ENCODE measurements at regions of chr5 and their contacts with region 1.

Region 1: DNA sequence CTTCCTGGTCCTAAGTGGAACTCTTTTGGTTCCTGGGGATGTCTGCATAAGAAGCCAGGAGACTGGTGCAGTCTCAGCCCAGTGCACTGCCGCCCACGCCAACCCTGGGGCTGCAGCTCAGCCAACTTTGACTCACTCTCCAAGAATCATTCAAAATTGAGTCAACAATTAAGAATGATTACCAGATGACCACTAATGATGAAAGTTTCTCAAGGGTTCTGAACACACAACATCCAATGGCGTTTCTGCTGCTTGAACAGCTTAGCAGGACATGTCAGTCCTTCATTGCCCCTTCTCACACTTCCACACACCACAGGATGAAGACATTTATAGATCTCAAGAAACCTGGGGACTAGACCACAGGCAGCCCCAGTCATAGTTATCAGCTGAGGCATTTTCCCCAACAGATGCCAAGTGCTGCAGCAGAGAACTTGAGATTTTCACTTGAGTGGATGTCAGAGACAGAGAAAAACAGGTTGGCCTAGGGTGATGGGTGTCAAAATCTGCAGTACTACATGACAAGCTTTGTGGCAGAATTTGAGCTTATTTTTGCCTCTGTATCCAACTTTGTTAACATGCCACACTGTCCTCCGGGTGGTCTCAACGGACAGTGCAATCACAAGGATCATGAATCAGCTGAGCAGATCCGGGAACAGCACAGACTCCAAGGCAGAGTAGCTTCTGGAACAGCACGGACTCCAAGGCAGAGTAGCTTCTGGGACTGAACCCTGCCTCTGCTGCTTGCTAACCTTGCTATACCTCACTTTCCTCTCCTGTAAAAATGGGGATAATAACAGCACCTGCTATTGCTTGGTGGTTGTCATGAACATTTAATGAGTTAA is 356.1 kb downstream of the SPOCK1 start:
- DNase-seq: peak; percentile 94
- ATAC-seq: peak; percentile 83
- H3K4me3 ChIP-seq: no peak overlapping the region
- H3K27ac ChIP-seq: peak overlapping the region; percentile 41
- H3K4me1 ChIP-seq: peaks cover 24% of the 10 kb centered on the region
- H3K27me3 ChIP-seq: no peaks in the 10 kb centered on the region
- CTCF ChIP-seq: no peak
- POLR2A ChIP-seq: no peak
- RAD21 ChIP-seq: peak; percentile 23; the same call in 1 of the 2 replicates

Region 2: DNA sequence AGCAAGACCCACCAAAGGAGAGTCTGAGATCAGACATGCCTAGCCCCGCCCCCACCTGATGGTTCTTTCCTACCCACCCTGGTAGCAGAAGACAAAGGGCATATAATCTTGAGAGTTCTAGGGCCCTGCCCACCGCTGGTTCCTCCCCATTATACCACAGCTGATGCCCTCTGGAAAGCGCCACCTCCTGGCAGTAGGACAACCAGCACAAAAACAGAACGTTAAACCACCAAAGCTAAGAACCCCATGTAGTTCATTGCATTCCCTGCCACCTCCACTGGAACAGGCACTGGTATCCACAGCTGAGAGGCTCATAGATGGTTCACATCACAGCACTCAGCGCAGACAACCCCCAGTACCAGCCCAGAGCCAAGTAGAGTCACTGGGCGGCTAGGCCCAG is 696.4 kb before region 1 on chr5:
- CTCF ChIA-PET with region 1: no interaction called
- POLR2A ChIA-PET with region 1: no interaction called
- dilution Hi-C with region 1: no loop called
- in situ Hi-C with region 1: no loop called
- intact Hi-C with region 1: no loop called
- DNase-seq: no peak
- ATAC-seq: no peak
- H3K4me3 ChIP-seq: no peak overlapping the region
- H3K27ac ChIP-seq: no peak overlapping the region
- H3K4me1 ChIP-seq: no peaks in the 10 kb centered on the region
- H3K27me3 ChIP-seq: no peaks in the 10 kb centered on the region
- CTCF ChIP-seq: no peak
- POLR2A ChIP-seq: no peak
- RAD21 ChIP-seq: no peak

Region 3: GRCh38 chr5:136840601-136841000 is 302.4 kb before region 1 on chr5:
- CTCF ChIA-PET with region 1: no interaction called
- POLR2A ChIA-PET with region 1: interaction called, 15 read pairs
- dilution Hi-C with region 1: no loop called
- in situ Hi-C with region 1: no loop called
- intact Hi-C with region 1: no loop called
- DNase-seq: no peak
- ATAC-seq: no peak
- H3K4me3 ChIP-seq: no peak overlapping the region
- H3K27ac ChIP-seq: no peak overlapping the region
- H3K4me1 ChIP-seq: no peaks in the 10 kb centered on the region
- H3K27me3 ChIP-seq: no peaks in the 10 kb centered on the region
- CTCF ChIP-seq: no peak
- POLR2A ChIP-seq: no peak
- RAD21 ChIP-seq: no peak

Region 4: GRCh38 chr5:137300411-137301240 is 157.6 kb after region 1 on chr5:
- CTCF ChIA-PET with region 1: no interaction called
- POLR2A ChIA-PET with region 1: no interaction called
- dilution Hi-C with region 1: no loop called
- in situ Hi-C with region 1: no loop called
- intact Hi-C with region 1: no loop called
- DNase-seq: peak; percentile 65
- ATAC-seq: peak; percentile 71
- H3K4me3 ChIP-seq: no peak overlapping the region
- H3K27ac ChIP-seq: no peak overlapping the region
- H3K4me1 ChIP-seq: no peaks in the 10 kb centered on the region; the same call in 1 of the 2 replicates
- H3K27me3 ChIP-seq: peaks cover 2% of the 10 kb centered on the region; the same call in 1 of the 2 replicates
- CTCF ChIP-seq: no peak
- POLR2A ChIP-seq: no peak
- RAD21 ChIP-seq: no peak

Region 5: GRCh38 chr5:137361280-137361679 is 218.3 kb after region 1 on chr5:
- CTCF ChIA-PET with region 1: no interaction called
- POLR2A ChIA-PET with region 1: no interaction called
- dilution Hi-C with region 1: no loop called
- in situ Hi-C with region 1: no loop called
- intact Hi-C with region 1: no loop called
- DNase-seq: peak; percentile 65
- ATAC-seq: no peak; the same call in 1 of the 2 replicates
- H3K4me3 ChIP-seq: no peak overlapping the region
- H3K27ac ChIP-seq: no peak overlapping the region
- H3K4me1 ChIP-seq: no peaks in the 10 kb centered on the region
- H3K27me3 ChIP-seq: no peaks in the 10 kb centered on the region
- CTCF ChIP-seq: no peak
- POLR2A ChIP-seq: no peak
- RAD21 ChIP-seq: no peak